ENCODE measurements at regions of chr15 and their contacts with region 1.

Region 1: GRCh38 chr15:68672781-68673205 is 94.0 kb downstream of the CORO2B start:
- DNase-seq: no peak
- H3K4me3 ChIP-seq: no peak overlapping the region
- CTCF ChIP-seq: peak; percentile 49

Region 2: DNA sequence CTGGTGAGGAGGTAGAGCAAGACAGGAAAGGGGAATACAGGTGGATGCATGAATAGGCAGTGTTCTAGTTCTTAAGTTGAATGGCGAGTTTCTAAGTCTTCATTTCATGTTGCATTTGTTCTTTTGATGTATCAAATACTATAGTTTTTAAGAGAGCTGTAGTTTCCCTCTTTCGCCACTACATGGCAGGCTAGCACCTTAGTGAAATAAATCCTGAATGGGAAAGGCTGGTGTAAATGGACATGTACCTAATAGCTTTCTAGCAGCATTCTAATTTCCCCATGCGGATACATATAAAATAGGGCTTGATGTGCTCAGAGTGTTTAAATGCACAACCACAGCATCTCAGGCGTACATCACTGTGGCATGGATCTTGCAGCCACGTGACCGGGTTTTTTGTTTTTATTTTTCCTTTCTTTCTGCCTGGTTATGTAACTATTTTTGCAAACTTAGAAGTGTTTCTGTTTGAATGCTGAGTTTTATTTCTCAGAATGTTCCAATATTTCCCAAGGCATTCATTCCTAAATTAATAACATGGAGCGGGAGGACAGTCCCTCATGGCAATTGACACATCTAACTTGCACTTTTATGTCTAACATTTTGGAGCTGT is 419.8 kb before region 1 on chr15:
- CTCF ChIA-PET with region 1: interaction called, 17 read pairs
- POLR2A ChIA-PET with region 1: no interaction called
- DNase-seq: no peak
- H3K4me3 ChIP-seq: no peak overlapping the region
- CTCF ChIP-seq: peak; percentile 69

Region 3: DNA sequence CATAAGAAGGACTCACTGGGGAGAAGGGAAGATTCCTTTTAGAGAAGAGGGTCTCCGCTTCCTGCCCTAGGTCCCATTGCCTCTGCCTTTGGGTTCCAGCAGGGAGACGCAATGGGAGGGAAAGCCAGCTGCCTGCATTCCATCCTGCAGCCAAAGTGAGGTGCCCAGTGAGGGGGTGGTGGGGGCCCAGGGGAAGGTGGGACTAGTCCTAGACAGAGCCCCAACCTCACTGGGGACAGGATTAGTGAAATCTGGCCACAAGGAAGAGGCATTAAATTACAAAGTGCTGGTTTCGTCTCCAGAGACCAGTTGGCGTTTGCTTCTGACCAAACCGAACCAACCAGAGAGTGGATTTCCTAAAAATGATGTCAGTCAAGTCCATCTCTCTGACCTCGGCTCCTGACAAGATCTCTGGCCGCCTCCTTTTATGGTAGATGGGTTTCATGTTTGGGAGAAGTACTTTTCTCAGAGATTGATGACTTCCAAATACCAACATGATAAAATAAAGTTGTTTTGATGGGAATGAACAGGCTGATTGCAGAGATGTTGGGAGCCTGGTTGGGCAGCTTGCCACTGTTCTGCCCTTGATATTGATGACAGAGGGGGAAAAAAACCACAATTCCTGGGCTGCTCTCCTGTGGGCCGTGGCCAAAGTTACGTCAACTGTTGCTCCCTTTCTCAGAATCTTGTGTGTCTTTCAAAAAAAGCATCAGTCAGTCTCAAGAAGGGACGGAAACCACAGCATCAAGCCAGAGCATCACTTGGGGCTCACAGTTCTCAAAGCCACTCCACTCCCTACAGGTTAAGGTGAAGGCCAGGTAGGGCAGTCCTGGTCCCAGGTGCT is 265.5 kb before region 1 on chr15:
- CTCF ChIA-PET with region 1: no interaction called
- POLR2A ChIA-PET with region 1: no interaction called
- DNase-seq: no peak
- H3K4me3 ChIP-seq: no peak overlapping the region
- CTCF ChIP-seq: no peak

Region 4: DNA sequence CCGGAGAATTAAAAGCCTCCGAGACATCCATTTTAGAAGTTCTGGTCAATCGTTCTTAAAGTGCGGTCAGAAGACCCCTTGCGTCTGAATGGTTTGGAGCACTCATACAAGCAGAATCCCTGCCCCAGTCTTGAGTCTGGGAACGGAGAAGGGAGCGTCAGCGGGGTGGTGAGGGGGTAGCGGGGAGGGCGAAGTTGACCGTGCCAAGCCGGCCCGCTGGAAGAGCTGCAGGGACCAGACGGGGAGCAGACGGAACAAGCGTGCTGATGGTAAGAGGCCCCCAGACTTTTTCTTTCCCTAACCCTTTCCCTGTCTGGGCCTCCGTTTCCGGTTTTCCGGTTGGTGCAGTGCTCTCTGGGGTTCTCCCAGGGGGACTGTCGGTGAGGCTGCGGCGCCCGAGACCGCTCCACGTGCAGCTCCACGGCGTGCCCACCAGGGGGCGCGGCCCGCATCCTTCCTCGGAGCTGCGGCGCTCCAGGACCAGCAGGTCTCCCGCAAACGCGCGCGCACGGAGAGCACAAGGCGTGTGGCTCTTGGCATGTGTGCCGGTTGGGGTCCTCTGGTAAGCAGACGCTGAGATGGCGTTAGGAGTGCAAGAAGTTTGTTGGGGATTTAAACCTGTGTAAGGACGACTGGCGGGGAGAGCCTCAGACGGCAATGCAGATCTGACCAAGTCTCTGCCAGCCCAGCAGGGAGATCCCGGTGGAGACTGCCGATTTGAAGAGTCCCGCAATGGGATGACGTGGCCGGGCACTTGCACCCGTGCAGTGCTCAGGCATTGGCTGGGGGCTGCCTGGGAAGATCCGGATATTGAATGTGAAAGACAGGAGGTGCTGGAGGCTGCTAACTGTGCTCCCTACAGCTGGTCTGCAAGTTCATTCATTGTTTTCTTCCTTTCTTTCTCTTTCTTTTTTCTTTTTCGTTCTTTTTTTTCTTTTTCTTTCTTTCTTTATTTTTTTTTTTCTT is 113.2 kb before region 1 on chr15:
- CTCF ChIA-PET with region 1: interaction called, 408 read pairs
- POLR2A ChIA-PET with region 1: interaction called, 7 read pairs
- DNase-seq: no peak
- H3K4me3 ChIP-seq: peak overlapping the region; percentile 59
- CTCF ChIP-seq: peak; percentile 98

Region 5: DNA sequence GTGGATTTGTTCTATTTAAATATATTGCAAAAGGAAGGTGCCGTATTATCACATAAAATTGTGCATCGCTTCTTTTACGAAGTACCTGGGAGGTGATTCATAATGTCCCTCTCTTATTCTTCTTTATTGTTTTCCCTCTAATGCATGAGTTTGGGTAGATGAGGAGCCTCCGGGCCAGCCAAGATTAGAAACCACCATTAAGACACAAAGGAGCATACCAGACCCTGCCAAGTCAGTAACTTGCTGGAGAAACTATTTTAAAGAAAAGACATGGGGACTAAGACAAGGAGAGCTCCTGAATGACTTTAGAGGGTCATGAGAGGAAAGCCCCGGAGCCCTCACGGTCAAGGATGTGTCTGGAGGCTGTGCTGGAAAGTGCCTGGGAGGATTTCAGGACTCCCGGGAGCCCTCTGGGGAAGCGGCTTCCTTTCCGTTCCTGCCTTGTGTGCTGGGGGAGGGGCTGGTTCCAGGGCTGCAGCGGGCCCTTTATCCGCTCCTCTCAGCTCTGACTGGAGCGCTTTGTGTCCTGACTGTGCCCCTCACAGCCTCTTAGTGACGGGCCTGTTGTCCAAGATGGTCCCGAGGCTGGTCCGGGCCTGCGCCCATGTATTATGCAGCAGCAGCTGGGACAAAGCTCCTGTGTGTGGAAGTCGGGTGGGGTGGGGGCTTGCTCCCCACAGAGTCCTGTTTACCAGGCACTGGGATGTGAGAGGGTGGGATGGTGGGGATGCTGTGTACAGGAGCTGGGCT is 58.3 kb before region 1 on chr15:
- CTCF ChIA-PET with region 1: no interaction called
- POLR2A ChIA-PET with region 1: no interaction called
- DNase-seq: no peak
- H3K4me3 ChIP-seq: no peak overlapping the region
- CTCF ChIP-seq: no peak

Region 6: GRCh38 chr15:68626739-68627138 is 46.1 kb before region 1 on chr15:
- CTCF ChIA-PET with region 1: interaction called, 10 read pairs
- POLR2A ChIA-PET with region 1: no interaction called
- DNase-seq: no peak
- H3K4me3 ChIP-seq: no peak overlapping the region
- CTCF ChIP-seq: no peak

Region 7: GRCh38 chr15:68691705-68692104 is 18.9 kb after region 1 on chr15:
- CTCF ChIA-PET with region 1: interaction called, 45 read pairs
- POLR2A ChIA-PET with region 1: no interaction called
- DNase-seq: no peak
- H3K4me3 ChIP-seq: no peak overlapping the region
- CTCF ChIP-seq: no peak

Region 8: DNA sequence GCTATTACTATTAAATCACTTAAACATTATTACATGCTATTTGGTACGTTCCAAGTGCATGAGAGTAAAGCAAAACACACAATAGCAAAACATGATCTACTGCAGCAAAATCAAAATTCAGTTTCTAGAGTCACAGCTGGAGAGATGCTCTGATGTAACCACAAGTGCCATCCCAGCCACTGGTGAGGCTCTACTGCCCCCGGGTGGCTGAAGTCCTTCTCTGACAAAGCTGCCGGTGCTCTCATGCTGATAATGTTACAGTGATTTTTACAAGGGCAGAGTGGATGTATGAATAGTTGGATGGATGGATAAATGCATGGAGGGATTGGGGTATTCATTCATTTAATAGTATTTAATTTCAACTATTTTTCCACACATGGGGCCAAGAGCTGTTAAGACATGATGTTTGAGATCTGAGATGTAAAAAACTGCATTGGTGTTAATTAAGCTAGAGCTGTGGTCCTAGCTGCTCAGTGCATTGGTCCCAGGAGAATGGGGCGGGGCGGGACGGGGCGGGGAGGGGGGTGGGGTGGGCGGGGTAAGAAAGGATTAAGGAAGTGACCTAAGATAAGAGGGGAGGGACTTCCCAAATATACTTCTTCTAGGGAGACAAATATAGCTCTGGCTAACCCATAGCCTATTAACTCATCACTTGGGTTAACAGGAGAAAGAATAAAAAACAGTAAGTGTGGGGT is 252.2 kb after region 1 on chr15:
- CTCF ChIA-PET with region 1: interaction called, 33 read pairs
- POLR2A ChIA-PET with region 1: no interaction called
- DNase-seq: peak; percentile 10
- H3K4me3 ChIP-seq: no peak overlapping the region
- CTCF ChIP-seq: peak; percentile 88

Measured in AG04449 (cell line).